AG04450 (cell line): ENCODE measurements at regions of chr16 and their contacts with region 1.

Region 1: GRCh38 chr16:85821441-85822135 is 22.1 kb downstream of the COX4I1 start:
- DNase-seq: peak; percentile 57
- H3K4me3 ChIP-seq: no peak overlapping the region
- H3K27ac ChIP-seq: no peak overlapping the region
- H3K27me3 ChIP-seq: peaks cover 23% of the 10 kb centered on the region
- CTCF ChIP-seq: peak; percentile 95

Region 2: GRCh38 chr16:85675251-85675927 is 146.2 kb before region 1 on chr16:
- CTCF ChIA-PET with region 1: no interaction called
- POLR2A ChIA-PET with region 1: no interaction called
- DNase-seq: no peak
- H3K4me3 ChIP-seq: no peak overlapping the region
- H3K27ac ChIP-seq: no peak overlapping the region
- H3K27me3 ChIP-seq: no peaks in the 10 kb centered on the region
- CTCF ChIP-seq: peak; percentile 65

Region 3: GRCh38 chr16:85799497-85800337 is 21.9 kb before region 1 on chr16 and contains the starts of genes COX4I1 and EMC8:
- CTCF ChIA-PET with region 1: interaction called, 11 read pairs
- POLR2A ChIA-PET with region 1: no interaction called
- DNase-seq: peak; percentile 75
- H3K4me3 ChIP-seq: peak within 1 kb of the TSS; percentile 96
- H3K27ac ChIP-seq: peak within 1 kb of the TSS; percentile 73
- H3K27me3 ChIP-seq: no peaks in the 10 kb centered on the region
- CTCF ChIP-seq: no peak
- polyA plus RNA-seq, gene COX4I1: 828 and 879 TPM in 2 replicates
- polyA plus RNA-seq, gene EMC8: 30.5 and 31.0 TPM in 2 replicates

Region 4: GRCh38 chr16:85986931-85987749 is 165.6 kb after region 1 on chr16:
- CTCF ChIA-PET with region 1: interaction called, 158 read pairs
- POLR2A ChIA-PET with region 1: no interaction called
- DNase-seq: no peak
- H3K4me3 ChIP-seq: no peak overlapping the region
- H3K27ac ChIP-seq: no peak overlapping the region
- H3K27me3 ChIP-seq: peaks cover 71% of the 10 kb centered on the region
- CTCF ChIP-seq: peak; percentile 25

Region 5: DNA sequence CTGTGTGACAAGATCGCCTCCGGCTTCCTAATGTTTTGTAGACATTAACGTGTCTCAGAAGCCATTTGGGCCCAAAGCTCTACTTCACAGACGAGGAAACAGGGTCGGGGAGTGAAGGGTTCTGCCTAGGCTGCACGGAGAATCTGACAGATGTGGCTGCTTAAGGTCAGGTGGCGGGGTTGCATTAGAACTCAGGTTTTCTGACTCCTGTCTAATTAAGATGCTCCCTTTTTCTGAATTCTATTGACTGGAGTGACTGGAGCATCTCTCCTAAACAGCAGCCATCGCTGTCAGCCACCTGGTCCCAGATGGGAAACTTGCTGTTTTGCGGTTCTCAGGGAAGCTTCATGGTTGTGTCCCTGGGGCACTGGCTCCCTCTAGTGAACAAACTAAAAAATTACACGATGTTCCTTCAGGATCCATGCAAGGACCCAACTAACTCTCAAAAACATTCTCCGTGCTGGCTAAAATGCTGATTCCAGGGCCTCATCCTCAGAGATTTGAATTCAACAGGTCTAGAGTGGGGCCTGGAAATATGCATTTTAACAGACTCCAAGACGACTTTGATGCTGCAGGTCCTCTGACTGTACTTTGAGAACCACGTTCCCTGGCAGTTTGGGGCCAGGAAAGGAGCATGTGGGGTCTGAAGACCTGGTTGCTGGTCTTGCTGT is 194.7 kb after region 1 on chr16:
- CTCF ChIA-PET with region 1: interaction called, 85 read pairs
- POLR2A ChIA-PET with region 1: no interaction called
- DNase-seq: no peak
- H3K4me3 ChIP-seq: no peak overlapping the region
- H3K27ac ChIP-seq: no peak overlapping the region
- H3K27me3 ChIP-seq: peaks cover 35% of the 10 kb centered on the region
- CTCF ChIP-seq: peak; percentile 85

Region 6: GRCh38 chr16:86029131-86029741 is 207.6 kb after region 1 on chr16:
- CTCF ChIA-PET with region 1: interaction called, 46 read pairs
- POLR2A ChIA-PET with region 1: no interaction called
- DNase-seq: peak; percentile 36
- H3K4me3 ChIP-seq: no peak overlapping the region
- H3K27ac ChIP-seq: no peak overlapping the region
- H3K27me3 ChIP-seq: peaks cover 46% of the 10 kb centered on the region
- CTCF ChIP-seq: no peak

Region 7: DNA sequence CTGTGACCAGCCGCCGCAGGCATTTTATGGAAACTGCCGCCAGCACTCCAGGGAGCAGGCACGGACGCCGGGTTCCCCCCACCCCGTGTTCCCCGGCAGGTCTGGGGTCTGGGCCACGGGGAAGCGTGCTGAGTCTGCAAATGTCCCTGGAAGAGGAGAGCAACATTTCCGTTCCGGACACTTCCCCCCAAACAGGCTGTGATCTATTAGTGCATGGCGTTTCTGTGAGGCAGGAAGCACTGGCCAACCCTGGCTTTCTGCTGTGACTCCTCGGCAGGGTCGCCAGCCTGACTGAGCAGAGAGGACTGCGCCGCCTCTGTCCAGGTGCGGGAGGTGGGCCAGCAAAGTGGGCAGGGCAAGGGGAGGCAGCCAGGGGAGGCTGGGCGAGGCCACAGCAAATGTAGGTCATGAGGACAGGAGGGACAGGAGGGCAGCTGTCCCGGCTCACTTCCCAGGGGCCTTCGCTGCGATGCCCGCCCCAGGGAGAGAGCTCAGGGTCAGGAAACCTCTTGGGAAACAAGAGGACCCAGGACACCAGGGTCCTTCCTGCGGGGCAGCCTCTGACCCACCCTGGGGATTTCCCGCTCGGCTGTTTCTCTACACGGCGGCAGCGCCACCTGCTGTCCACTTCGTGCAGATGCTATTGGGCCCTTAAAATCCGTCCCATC is 698.2 kb after region 1 on chr16:
- CTCF ChIA-PET with region 1: interaction called, 15 read pairs
- POLR2A ChIA-PET with region 1: no interaction called
- DNase-seq: peak; percentile 51
- H3K4me3 ChIP-seq: peak overlapping the region; percentile 42
- H3K27ac ChIP-seq: peak overlapping the region; percentile 47
- H3K27me3 ChIP-seq: no peaks in the 10 kb centered on the region
- CTCF ChIP-seq: peak; percentile 92